ENCODE measurements at regions of chr4 and their contacts with region 1.

Region 1: GRCh38 chr4:113584407-113585150 is 177.0 kb downstream of the CAMK2D start:
- DNase-seq: no peak
- ATAC-seq: no peak
- H3K4me3 ChIP-seq: no peak overlapping the region
- H3K4me3 Mint-ChIP-seq: no peak overlapping the region
- H3K27ac ChIP-seq: no peak overlapping the region
- H3K27ac Mint-ChIP-seq: peak overlapping the region; percentile 1
- H3K4me1 ChIP-seq: peaks cover 3% of the 10 kb centered on the region
- H3K4me1 Mint-ChIP-seq: peaks cover 37% of the 10 kb centered on the region
- H3K27me3 ChIP-seq: no peaks in the 10 kb centered on the region
- H3K27me3 Mint-ChIP-seq: no peaks in the 10 kb centered on the region
- CTCF ChIP-seq: no peak

Region 2: DNA sequence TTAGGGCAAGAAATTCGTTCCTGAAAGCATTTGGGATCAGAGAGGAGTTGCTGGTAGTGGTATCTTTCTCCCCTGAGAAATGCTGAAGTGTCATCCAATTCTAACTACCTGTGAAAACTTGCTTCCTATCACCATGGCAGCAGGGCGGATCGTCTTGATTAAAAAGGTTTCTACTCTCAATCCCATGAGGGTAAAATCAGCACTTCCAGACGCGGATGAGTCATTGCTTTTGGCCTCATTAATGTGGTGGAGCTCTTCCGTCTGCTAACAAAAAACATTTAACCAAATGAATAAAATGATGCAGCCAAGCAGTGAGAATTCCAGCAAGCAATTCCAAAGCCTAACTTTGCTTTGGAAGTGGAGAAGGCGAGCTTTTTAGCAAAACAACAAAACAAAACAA is 148.7 kb before region 1 on chr4:
- CTCF ChIA-PET with region 1: no interaction called
- POLR2A ChIA-PET with region 1: no interaction called
- intact Hi-C with region 1: no loop called
- DNase-seq: no peak
- ATAC-seq: no peak
- H3K4me3 ChIP-seq: no peak overlapping the region
- H3K4me3 Mint-ChIP-seq: no peak overlapping the region
- H3K27ac ChIP-seq: no peak overlapping the region
- H3K27ac Mint-ChIP-seq: no peak overlapping the region
- H3K4me1 ChIP-seq: no peaks in the 10 kb centered on the region
- H3K4me1 Mint-ChIP-seq: peaks cover 7% of the 10 kb centered on the region
- H3K27me3 ChIP-seq: no peaks in the 10 kb centered on the region
- H3K27me3 Mint-ChIP-seq: peaks cover 5% of the 10 kb centered on the region
- CTCF ChIP-seq: no peak

Region 3: GRCh38 chr4:113555868-113556267 is 28.7 kb before region 1 on chr4:
- CTCF ChIA-PET with region 1: interaction called, 3 read pairs
- POLR2A ChIA-PET with region 1: no interaction called
- intact Hi-C with region 1: loop called in 1 of 2 experiments (anchors 5 kb)
- DNase-seq: no peak
- ATAC-seq: no peak
- H3K4me3 ChIP-seq: no peak overlapping the region
- H3K4me3 Mint-ChIP-seq: no peak overlapping the region
- H3K27ac ChIP-seq: no peak overlapping the region
- H3K27ac Mint-ChIP-seq: peak overlapping the region; percentile 64
- H3K4me1 ChIP-seq: no peaks in the 10 kb centered on the region
- H3K4me1 Mint-ChIP-seq: peaks cover 5% of the 10 kb centered on the region
- H3K27me3 ChIP-seq: no peaks in the 10 kb centered on the region
- H3K27me3 Mint-ChIP-seq: no peaks in the 10 kb centered on the region
- CTCF ChIP-seq: no peak

Region 4: DNA sequence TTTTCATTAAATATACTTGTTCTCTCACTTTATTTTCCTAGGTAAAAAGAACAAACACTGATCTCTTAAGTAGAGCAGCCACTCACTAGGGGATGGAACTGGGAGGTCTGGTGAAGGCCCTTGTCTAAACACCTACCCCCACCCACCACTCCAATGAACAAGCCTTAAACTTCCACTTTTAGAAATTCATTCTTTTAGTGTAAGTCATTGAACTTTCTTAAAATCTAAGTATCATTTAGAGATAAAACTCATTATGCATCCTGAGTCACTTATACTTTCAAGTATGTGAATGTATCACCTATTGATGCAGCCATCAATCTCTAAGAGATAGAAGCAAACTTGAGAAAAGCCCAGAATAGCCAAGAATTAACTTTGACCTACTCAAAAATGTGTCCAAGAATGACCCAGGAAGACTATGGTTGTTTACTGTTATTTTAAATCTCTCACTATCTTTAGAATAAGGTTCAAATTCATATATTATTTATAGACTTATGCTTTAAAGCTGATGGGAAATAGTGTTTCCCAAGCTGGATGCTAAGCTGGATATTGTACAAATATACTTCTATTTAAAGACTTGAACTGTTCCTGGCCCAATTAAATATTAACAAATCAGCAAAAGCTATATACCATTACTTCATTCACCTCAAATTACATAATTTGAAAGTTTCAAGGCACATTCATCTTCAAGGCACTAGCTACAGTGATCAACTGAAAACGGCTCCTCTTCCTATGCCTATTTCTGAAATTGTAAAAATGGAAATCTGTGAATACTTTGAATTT is 127.5 kb after region 1 on chr4:
- CTCF ChIA-PET with region 1: no interaction called
- POLR2A ChIA-PET with region 1: no interaction called
- intact Hi-C with region 1: no loop called
- DNase-seq: no peak
- ATAC-seq: no peak
- H3K4me3 ChIP-seq: no peak overlapping the region
- H3K4me3 Mint-ChIP-seq: no peak overlapping the region
- H3K27ac ChIP-seq: no peak overlapping the region
- H3K27ac Mint-ChIP-seq: no peak overlapping the region
- H3K4me1 ChIP-seq: no peaks in the 10 kb centered on the region
- H3K4me1 Mint-ChIP-seq: peaks cover 24% of the 10 kb centered on the region
- H3K27me3 ChIP-seq: no peaks in the 10 kb centered on the region
- H3K27me3 Mint-ChIP-seq: no peaks in the 10 kb centered on the region
- CTCF ChIP-seq: no peak